A549 (cell line): ENCODE measurements at regions of chr16 and their contacts with region 1.

Region 1: DNA sequence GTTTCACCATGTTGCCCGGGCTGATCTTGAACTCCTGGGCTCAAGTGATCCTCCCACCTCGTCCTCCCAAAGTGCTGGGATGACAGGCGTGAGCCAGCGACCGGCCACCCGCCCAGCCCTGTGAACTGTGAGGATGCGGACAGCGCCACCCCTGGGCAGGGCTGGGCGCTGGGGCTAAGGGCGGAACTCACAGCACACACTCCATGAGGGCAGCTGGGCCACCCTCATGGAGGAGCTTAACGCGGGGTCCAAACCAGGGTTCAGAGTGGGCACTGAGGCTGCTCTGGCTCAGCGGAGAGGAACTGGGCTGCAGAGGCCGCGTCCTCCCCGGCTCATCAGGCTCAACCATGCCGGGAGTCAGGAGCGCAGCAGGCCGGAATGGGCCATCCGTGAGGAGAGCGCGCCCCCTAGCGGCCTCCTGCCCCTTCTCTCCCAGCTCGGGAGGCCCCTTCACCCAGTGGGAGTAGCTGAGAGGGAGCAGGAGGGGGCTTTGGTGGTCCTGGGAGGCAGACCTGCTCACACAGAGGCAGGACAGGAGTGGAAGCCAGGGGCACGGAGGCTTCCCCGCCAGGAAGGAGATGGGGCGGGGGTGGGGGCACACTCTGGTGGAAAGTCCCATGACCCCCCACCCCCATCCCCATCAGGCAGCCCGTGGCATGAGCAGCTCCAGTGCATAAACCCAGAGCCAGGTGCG is 13.8 kb downstream of the CORO7 start:
- DNase-seq: peak; percentile 72 to 88
- ATAC-seq: peak; percentile 90 to 93
- H3K4me3 ChIP-seq: 0 out of 3 replicates have a peak overlapping the region, but pooled peaks have one; percentile 28
- H3K27ac ChIP-seq: peak overlapping the region; percentile 64 to 89
- H3K4me1 ChIP-seq: peaks cover 4% of the 10 kb centered on the region; the same call in 1 of the 3 replicates
- CTCF ChIP-seq: peak; percentile 99
- EP300 ChIP-seq: no peak
- POLR2A ChIP-seq: no peak
- RAD21 ChIP-seq: peak; percentile 93 to 99

Region 2: DNA sequence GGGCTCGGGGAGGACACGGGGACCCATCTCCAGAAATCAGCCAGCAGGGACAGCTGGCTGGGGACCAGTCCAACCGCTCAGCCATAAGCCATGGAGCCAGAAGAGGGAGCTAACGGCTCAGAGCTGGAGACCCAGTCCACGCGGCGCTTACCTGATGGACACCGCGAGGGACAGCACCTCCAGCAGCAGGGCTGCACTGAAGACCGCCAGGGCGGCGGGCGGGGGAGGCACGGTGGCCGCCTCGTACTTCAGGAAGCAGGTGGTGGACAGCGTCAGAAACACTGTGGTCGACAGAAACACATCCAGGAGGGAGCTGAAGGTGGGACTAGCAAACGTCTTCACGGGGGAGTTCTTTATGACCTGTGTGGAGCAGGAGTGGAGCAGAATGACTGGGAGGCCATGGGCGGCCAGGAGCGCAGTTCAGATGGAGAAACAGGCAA is 419.5 kb before region 1 on chr16:
- CTCF ChIA-PET with region 1: interaction called, 29 read pairs
- POLR2A ChIA-PET with region 1: no interaction called
- DNase-seq: peak; percentile 81 to 93
- ATAC-seq: peak; percentile 96 to 98
- H3K4me3 ChIP-seq: no peak overlapping the region
- H3K27ac ChIP-seq: peak overlapping the region; percentile 46 to 75; a peak in 4 of 6 replicates
- H3K4me1 ChIP-seq: peaks cover 11% of the 10 kb centered on the region; the same call in 2 of the 3 replicates
- CTCF ChIP-seq: peak; percentile 91
- EP300 ChIP-seq: no peak
- POLR2A ChIP-seq: no peak
- RAD21 ChIP-seq: peak; percentile 96 to 97

Region 3: GRCh38 chr16:4271176-4272066 is 131.2 kb before region 1 on chr16:
- CTCF ChIA-PET with region 1: interaction called, 31 read pairs
- POLR2A ChIA-PET with region 1: interaction called, 5 read pairs
- DNase-seq: peak; percentile 89 to 96
- ATAC-seq: peak; percentile 73 to 86
- H3K4me3 ChIP-seq: peak overlapping the region; percentile 87
- H3K27ac ChIP-seq: peak overlapping the region; percentile 98 to 99
- H3K4me1 ChIP-seq: peaks cover 10% of the 10 kb centered on the region
- CTCF ChIP-seq: peak; percentile 16; the same call in 1 of the 3 replicates
- EP300 ChIP-seq: no peak
- POLR2A ChIP-seq: peak; percentile 61
- RAD21 ChIP-seq: no peak

Region 4: GRCh38 chr16:4307215-4308037 is 95.2 kb before region 1 on chr16:
- CTCF ChIA-PET with region 1: interaction called, 82 read pairs
- POLR2A ChIA-PET with region 1: no interaction called
- DNase-seq: peak; percentile 87 to 96
- ATAC-seq: peak; percentile 86 to 87
- H3K4me3 ChIP-seq: peak overlapping the region; percentile 88
- H3K27ac ChIP-seq: peak overlapping the region; percentile 90 to 93
- H3K4me1 ChIP-seq: peaks cover 35% of the 10 kb centered on the region
- CTCF ChIP-seq: no peak
- EP300 ChIP-seq: peak in 1 of 2 experiments; percentile 61; a peak in 1 of 5 replicates
- POLR2A ChIP-seq: peak; percentile 53
- RAD21 ChIP-seq: no peak; a peak in 1 of 5 replicates

Region 5: DNA sequence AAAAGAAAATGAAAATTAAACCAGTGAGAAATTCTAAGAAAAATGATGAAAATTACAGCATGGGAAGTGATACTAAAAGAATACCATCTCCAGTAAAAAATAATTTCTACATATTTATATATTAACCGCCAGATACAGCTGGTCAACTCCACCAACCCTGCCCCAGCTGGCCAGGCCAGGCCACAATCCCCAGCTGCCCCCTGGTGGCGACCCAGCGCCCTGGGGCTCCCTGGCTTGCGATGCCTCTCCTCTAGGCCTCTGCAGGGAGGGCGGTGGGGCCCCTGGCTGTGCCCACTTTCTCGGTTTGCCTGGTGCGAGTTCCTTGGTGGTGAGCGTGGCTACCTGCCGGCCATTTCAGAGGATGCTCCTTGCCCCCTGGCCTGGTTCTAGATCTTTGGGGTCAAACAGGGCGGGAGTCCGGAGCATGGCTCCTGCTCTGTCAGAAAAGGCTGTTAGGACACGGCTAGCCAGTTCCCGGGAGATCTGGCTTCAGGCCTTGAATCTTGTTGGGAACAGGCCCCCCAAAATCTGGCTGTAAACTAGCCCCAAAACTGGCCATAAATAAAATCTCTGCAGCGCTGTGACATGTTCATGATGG is 72.2 kb before region 1 on chr16:
- CTCF ChIA-PET with region 1: interaction called, 114 read pairs
- POLR2A ChIA-PET with region 1: no interaction called
- DNase-seq: peak; percentile 72 to 77
- ATAC-seq: peak; percentile 84 to 90
- H3K4me3 ChIP-seq: no peak overlapping the region
- H3K27ac ChIP-seq: peak overlapping the region in 1 of 2 experiments; percentile 87; a peak in 1 of 6 replicates
- H3K4me1 ChIP-seq: peaks cover 44% of the 10 kb centered on the region
- CTCF ChIP-seq: peak; percentile 92
- EP300 ChIP-seq: no peak
- POLR2A ChIP-seq: no peak
- RAD21 ChIP-seq: peak; percentile 94 to 97

Region 6: GRCh38 chr16:4371357-4372000 is 31.1 kb before region 1 on chr16 and contains the start of gene VASN:
- CTCF ChIA-PET with region 1: interaction called, 833 read pairs
- POLR2A ChIA-PET with region 1: interaction called, 4 read pairs
- DNase-seq: peak; percentile 68 to 78
- ATAC-seq: peak; percentile 49 to 64
- H3K4me3 ChIP-seq: peak within 1 kb of the TSS; percentile 70
- H3K27ac ChIP-seq: peak within 1 kb of the TSS; percentile 74 to 94
- H3K4me1 ChIP-seq: peaks cover 61% of the 10 kb centered on the region
- CTCF ChIP-seq: no peak
- EP300 ChIP-seq: no peak
- POLR2A ChIP-seq: peak; percentile 98
- RAD21 ChIP-seq: no peak
- polyA plus RNA-seq, gene VASN: 2.0 and 2.3 TPM in 2 replicates